Panc1 (cell line): ENCODE measurements at regions of chr2 and their contacts with region 1.

Region 1: GRCh38 chr2:219041252-219041651 is at the start of gene CFAP65:
- DNase-seq: peak; percentile 10
- ATAC-seq: peak; percentile 88
- H3K4me3 ChIP-seq: peak within 1 kb of the TSS; percentile 69 to 78
- H3K27ac ChIP-seq: no peak within 1 kb of the TSS
- H3K4me1 ChIP-seq: no peaks in the 10 kb centered on the region
- H3K27me3 ChIP-seq: peaks cover 19% of the 10 kb centered on the region
- CTCF ChIP-seq: no peak
- total RNA-seq, gene CFAP65: 0.33 TPM

Region 2: GRCh38 chr2:218671654-218672566 is 369.3 kb before region 1 on chr2 and contains the starts of genes RNF25 and STK36:
- CTCF ChIA-PET with region 1: no interaction called
- POLR2A ChIA-PET with region 1: no interaction called
- in situ Hi-C with region 1: no loop called
- intact Hi-C with region 1: no loop called
- DNase-seq: peak; percentile 47
- ATAC-seq: peak; percentile 99
- H3K4me3 ChIP-seq: peak within 1 kb of the TSS; percentile 92 to 97
- H3K27ac ChIP-seq: peak within 1 kb of the TSS; percentile 86
- H3K4me1 ChIP-seq: peaks cover 5% of the 10 kb centered on the region; the same call in 1 of the 2 replicates
- H3K27me3 ChIP-seq: no peaks in the 10 kb centered on the region
- CTCF ChIP-seq: no peak
- total RNA-seq, gene RNF25: 40.4 TPM
- total RNA-seq, gene STK36: 48.6 TPM

Region 3: GRCh38 chr2:219362524-219363164 is 321.4 kb after region 1 on chr2:
- CTCF ChIA-PET with region 1: interaction called, 10 read pairs
- POLR2A ChIA-PET with region 1: no interaction called
- in situ Hi-C with region 1: no loop called
- intact Hi-C with region 1: no loop called
- DNase-seq: no peak
- ATAC-seq: peak; percentile 64
- H3K4me3 ChIP-seq: no peak overlapping the region
- H3K27ac ChIP-seq: peak overlapping the region; percentile 55; the same call in 1 of the 2 replicates
- H3K4me1 ChIP-seq: peaks cover 5% of the 10 kb centered on the region
- H3K27me3 ChIP-seq: no peaks in the 10 kb centered on the region; the same call in 1 of the 2 replicates
- CTCF ChIP-seq: no peak